ENCODE measurements at regions of chr1 and their contacts with region 1.

Region 1: DNA sequence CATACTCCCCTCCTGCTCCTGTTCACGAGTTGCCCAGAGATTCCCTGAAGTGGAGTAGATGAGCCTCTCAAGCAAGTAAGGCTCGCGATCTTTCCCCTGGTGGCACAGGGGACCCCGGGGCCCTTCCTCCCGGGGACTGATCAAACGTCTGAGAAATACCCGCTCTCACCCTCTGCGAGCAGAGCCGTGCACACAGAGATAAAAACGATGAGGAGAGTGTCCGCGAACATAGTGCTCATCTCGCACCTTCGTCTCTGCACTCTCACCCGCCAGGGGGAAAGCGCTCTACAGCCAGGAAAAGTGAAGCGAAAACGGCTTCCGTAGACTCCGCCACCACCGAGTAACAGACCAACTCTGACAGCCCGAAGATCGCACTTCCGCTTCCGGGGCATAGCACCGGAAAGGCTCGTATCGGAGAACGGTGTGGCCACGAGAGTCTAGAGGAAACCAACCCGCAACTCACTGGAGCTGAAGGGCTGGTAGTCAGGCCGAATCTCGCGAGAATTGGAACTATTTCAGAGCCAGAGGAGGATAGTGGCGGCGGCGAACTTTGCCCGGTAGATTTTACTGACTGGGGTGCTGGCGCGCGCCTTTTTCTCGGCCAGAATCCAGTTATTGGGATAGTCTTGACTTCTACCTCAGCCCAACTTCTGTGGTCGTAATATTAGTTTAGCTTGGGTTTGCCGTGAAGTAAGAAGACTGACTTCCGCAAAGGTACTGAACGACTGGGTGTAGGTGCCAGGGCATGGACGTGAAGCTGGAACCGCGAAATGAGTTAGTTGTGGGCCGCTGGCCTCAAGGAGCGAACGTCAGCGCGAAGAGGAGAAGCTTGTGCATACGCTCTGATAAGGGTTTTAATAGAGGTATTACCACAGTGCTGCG is at the start of gene TMCO1:
- DNase-seq: peak; percentile 85 to 99 (median 90)
- ATAC-seq: peak; percentile 93
- H3K4me3 ChIP-seq: peak within 1 kb of the TSS; percentile 76
- H3K4me3 Mint-ChIP-seq: peak within 1 kb of the TSS; percentile 95
- H3K27ac ChIP-seq: peak within 1 kb of the TSS; percentile 84 to 92
- H3K27ac Mint-ChIP-seq: peak within 1 kb of the TSS; percentile 93
- H3K4me1 ChIP-seq: peaks cover 28% of the 10 kb centered on the region
- H3K4me1 Mint-ChIP-seq: peaks cover 75% of the 10 kb centered on the region
- H3K27me3 ChIP-seq: no peaks in the 10 kb centered on the region
- H3K27me3 Mint-ChIP-seq: no peaks in the 10 kb centered on the region
- CTCF ChIP-seq: no peak
- total RNA-seq, gene TMCO1: 25.7 to 27.4 TPM

Region 2: DNA sequence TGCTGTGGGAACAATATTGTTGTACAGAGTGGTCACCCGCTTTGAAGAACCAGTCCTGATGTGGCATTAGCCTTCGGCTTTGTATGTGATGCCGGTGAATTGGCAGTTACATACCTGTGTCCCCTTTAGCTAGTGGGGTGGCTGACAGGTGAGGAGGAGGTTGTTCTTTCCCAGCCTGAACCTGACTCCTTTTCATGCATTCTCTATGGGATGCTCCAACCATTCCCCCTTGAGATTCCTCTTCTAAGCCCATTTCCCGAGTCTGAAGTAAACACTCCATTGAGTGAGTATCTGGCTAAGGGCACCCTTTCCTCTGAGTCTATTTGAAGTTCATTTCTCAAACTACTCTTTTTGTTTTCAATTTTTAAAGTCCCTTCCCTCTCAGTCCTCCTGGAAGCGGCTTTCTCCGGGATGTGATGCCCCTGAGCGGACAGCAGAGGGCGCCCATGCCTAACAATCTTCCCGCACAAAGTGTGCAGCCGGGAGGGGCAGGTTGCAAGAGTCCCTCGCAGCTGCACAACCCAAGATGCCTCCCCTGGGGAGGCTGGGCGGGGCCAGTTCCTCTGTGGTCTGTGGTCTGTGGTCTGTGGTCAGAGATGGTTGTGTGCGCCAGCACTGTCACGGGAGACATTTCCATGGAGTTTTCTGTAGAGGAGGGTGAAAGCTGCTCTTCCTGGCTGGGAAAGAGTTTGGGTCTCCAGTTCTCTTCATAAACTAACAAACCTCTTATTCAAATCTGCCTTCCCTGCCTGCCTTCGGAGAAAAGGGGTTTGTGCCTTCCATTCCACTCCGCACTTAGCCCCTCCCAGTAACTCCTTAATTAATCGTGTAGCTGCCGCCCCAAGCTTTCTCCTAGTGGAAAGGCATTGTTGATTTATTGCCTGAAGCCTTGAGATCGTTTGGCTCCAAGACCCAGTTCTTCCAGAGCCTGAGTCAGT is 375.9 kb before region 1 on chr1:
- CTCF ChIA-PET with region 1: no interaction called
- POLR2A ChIA-PET with region 1: no interaction called
- intact Hi-C with region 1: loop called in 1 of 2 experiments (anchors 5 kb)
- DNase-seq: peak; percentile 83 to 97 (median 88)
- ATAC-seq: peak; percentile 99
- H3K4me3 ChIP-seq: peak overlapping the region; percentile 23
- H3K4me3 Mint-ChIP-seq: peak overlapping the region; percentile 75
- H3K27ac ChIP-seq: no peak overlapping the region
- H3K27ac Mint-ChIP-seq: peak overlapping the region; percentile 75
- H3K4me1 ChIP-seq: peaks cover 19% of the 10 kb centered on the region
- H3K4me1 Mint-ChIP-seq: peaks cover 17% of the 10 kb centered on the region
- H3K27me3 ChIP-seq: peaks cover 56 to 72% of the 10 kb centered on the region in 2 experiments
- H3K27me3 Mint-ChIP-seq: peaks cover 92% of the 10 kb centered on the region
- CTCF ChIP-seq: peak; percentile 98

Region 3: DNA sequence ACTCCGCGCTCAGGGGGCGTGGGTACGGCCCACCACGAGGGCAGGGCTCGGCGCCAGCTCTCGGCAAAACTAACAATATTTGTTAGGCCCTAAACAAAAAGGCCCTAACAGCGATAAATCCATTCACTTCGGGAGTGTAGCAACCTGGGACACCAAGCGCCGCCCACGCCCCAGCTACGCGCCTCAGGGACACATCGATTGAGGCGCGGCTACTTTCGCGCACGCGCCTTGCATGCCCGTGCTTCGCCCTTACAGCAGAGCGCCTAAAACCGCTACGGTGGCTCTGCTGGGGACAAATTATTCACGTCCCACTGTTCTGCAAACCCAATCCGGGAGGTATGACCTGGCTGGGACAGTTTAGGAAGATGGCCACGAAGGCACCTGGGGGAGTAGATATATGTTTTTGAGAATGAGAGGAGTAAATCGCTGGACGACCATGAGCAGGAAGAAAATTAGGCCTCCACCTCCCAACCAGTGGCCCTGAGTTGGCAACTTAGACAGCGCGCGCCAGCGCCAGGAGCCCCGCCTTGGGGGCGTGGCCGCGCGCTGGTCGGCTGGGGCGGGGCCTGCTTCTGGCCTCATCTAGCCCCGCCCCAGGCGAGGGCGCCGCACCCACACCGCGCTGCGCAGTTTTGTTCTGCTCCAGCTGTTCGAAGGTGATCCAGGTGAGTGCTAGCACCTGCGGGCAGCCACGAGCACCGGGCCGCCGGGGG is 138.0 kb before region 1 on chr1 and contains the start of gene MGST3:
- CTCF ChIA-PET with region 1: no interaction called
- POLR2A ChIA-PET with region 1: interaction called, 28 read pairs
- intact Hi-C with region 1: loop called (anchors 2 kb)
- DNase-seq: peak; percentile 83 to 97 (median 90)
- ATAC-seq: peak; percentile 91
- H3K4me3 ChIP-seq: peak within 1 kb of the TSS; percentile 80
- H3K4me3 Mint-ChIP-seq: no peak within 1 kb of the TSS
- H3K27ac ChIP-seq: peak within 1 kb of the TSS; percentile 55 to 92
- H3K27ac Mint-ChIP-seq: no peak within 1 kb of the TSS
- H3K4me1 ChIP-seq: peaks cover 29% of the 10 kb centered on the region
- H3K4me1 Mint-ChIP-seq: peaks cover 14% of the 10 kb centered on the region
- H3K27me3 ChIP-seq: no peaks in the 10 kb centered on the region
- H3K27me3 Mint-ChIP-seq: no peaks in the 10 kb centered on the region
- CTCF ChIP-seq: no peak
- total RNA-seq, gene MGST3: 22.0 to 23.5 TPM

Region 4: DNA sequence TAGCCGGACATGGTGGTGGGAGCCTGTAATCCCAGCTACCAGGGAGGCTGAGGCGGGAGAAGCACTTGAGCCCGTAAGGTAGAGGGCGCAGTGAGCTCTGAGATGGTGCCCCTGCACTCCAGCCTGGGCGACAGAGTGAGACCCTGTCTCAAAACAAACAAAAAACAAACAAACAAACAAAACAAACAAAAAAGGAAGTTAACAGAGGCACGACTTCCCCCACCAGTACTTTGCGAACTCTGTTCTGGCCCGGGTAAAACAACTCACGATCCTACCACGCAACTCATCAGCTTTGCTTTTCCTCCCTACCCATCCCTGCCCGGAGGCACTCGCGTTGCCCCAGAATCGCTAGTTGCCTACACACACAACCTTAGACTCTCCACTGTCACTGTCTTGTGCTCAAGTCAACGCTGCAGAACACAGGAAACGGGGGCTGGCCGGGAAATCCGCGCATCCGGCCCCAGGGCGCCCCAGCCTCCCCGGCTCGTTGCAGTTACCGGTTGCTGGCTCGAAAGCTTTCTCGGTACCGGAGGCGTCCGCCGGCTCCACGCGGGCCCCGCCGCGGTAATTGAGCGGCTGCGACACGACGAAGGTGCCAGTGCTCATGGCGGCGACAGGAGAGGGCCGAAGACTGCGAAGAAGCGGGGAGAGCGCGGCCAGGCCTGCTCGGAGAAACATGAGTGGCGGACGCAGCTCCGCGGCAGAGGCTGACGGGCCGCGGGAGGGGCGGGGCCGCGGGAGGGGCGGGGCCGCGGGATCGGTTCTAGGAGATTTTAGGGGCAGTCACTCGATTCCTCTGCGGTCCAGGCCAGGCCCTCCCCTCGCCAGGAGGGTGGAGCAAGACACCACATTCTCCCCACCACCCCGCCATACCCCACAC is 70.6 kb before region 1 on chr1 and contains the start of gene ALDH9A1:
- CTCF ChIA-PET with region 1: interaction called, 4 read pairs
- POLR2A ChIA-PET with region 1: interaction called, 27 read pairs
- intact Hi-C with region 1: loop called (anchors 2 kb)
- DNase-seq: peak; percentile 70 to 90 (median 80)
- ATAC-seq: peak; percentile 91
- H3K4me3 ChIP-seq: peak within 1 kb of the TSS; percentile 65
- H3K4me3 Mint-ChIP-seq: peak within 1 kb of the TSS; percentile 98
- H3K27ac ChIP-seq: peak within 1 kb of the TSS; percentile 81 to 90
- H3K27ac Mint-ChIP-seq: peak within 1 kb of the TSS; percentile 92
- H3K4me1 ChIP-seq: peaks cover 26% of the 10 kb centered on the region
- H3K4me1 Mint-ChIP-seq: peaks cover 45% of the 10 kb centered on the region
- H3K27me3 ChIP-seq: no peaks in the 10 kb centered on the region
- H3K27me3 Mint-ChIP-seq: no peaks in the 10 kb centered on the region
- CTCF ChIP-seq: no peak
- total RNA-seq, gene ALDH9A1: 33.9 to 35.5 TPM

Region 5: DNA sequence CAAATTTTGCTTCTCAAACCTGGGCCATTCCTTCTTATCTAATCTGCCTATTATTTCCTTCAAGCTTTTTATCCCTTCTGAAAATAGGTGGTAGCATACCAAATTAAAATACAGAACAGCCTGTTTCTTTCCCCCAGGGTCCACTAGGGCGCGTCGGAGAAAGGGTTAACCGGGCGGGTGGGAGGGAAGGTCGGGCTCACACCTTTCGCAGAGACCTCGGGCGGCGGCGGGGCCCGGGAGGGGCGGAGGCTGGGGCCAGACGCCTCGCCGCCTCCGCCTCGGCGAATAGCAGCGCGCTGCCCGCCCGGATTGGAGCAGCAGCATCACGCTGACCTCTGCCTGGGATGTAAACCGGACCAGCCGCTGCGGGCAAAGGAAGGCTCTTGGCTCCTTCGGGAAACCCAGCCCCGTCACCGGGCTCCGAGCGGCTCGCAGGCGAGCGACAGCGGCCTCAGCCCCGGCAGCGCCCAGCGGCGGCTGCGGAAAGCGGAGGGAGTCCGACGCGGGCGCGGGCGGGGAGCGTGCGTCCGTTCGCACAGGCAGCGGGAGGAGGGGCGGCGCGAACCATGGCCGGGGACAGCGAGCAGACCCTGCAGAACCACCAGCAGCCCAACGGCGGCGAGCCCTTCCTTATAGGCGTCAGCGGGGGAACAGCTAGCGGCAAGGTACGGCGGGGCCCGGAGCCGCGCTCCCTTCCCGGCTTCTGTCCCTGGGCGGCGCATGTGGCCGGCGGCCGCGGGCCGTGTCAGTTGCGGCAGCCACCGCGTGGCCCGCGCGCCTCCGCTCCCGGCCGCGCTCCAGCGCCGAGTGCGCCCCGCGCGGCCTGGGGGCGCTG is 58.7 kb after region 1 on chr1 and contains the start of gene UCK2:
- CTCF ChIA-PET with region 1: no interaction called
- POLR2A ChIA-PET with region 1: interaction called, 14 read pairs
- intact Hi-C with region 1: loop called (anchors 5 kb)
- DNase-seq: peak; percentile 11 to 75 (median 24)
- ATAC-seq: peak; percentile 78
- H3K4me3 ChIP-seq: peak within 1 kb of the TSS; percentile 69
- H3K4me3 Mint-ChIP-seq: peak within 1 kb of the TSS; percentile 91
- H3K27ac ChIP-seq: no peak within 1 kb of the TSS
- H3K27ac Mint-ChIP-seq: peak within 1 kb of the TSS; percentile 31
- H3K4me1 ChIP-seq: peaks cover 16% of the 10 kb centered on the region
- H3K4me1 Mint-ChIP-seq: peaks cover 23% of the 10 kb centered on the region
- H3K27me3 ChIP-seq: no peaks in the 10 kb centered on the region
- H3K27me3 Mint-ChIP-seq: peaks cover 4% of the 10 kb centered on the region
- CTCF ChIP-seq: no peak
- total RNA-seq, gene UCK2: 0.67 to 0.71 TPM

Region 6: DNA sequence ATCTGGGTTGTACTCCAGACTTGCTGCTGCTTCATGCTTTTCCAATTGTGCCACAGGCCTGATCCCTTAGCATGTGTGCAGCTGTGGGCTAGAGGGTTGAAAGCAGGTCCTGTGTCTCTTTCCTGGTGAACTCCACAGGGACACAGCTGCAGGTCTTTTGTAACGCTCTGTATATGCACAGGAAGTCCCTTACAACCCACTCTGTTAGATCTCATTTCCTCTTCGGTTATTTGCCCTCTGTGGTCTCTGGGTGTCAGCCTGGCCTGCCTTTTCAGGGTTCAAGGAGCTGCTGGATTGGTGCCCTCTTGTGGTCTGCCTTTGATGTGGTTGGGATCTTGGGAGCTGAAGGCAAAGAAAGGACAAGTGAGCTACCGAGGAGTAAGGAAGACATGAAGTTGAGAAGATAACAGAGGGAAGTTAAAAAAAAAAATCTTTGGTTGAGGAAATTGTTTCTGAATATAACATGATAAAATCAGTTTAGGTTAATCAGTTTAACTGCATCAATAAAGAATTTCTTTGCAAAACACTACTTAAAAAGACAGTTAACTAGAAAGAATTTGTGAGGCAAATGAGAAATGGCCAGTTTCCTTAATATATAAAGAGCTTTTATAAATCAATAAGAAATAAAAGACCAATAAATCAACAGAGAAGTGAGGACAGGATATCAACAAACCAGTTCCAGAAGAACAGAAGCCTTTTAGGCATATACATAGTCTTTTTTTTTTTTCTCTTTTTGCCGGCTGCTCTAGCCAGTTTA is 102.7 kb after region 1 on chr1:
- CTCF ChIA-PET with region 1: no interaction called
- POLR2A ChIA-PET with region 1: interaction called, 11 read pairs
- intact Hi-C with region 1: no loop called
- DNase-seq: peak in 13 of 14 experiments; percentile 13 to 78 (median 33)
- ATAC-seq: peak; percentile 81
- H3K4me3 ChIP-seq: no peak overlapping the region
- H3K4me3 Mint-ChIP-seq: peak overlapping the region; percentile 52
- H3K27ac ChIP-seq: peak overlapping the region in 1 of 2 donors; percentile 5
- H3K27ac Mint-ChIP-seq: peak overlapping the region; percentile 25
- H3K4me1 ChIP-seq: peaks cover 29% of the 10 kb centered on the region
- H3K4me1 Mint-ChIP-seq: peaks cover 56% of the 10 kb centered on the region
- H3K27me3 ChIP-seq: no peaks in the 10 kb centered on the region
- H3K27me3 Mint-ChIP-seq: no peaks in the 10 kb centered on the region
- CTCF ChIP-seq: peak; percentile 35

Region 7: GRCh38 chr1:166838766-166839599 is 1070.2 kb after region 1 on chr1 and contains the start of gene POGK:
- CTCF ChIA-PET with region 1: no interaction called
- POLR2A ChIA-PET with region 1: no interaction called
- intact Hi-C with region 1: loop called in 1 of 2 experiments (anchors 10 kb)
- DNase-seq: peak; percentile 61 to 94 (median 78)
- ATAC-seq: peak; percentile 87
- H3K4me3 ChIP-seq: peak within 1 kb of the TSS; percentile 67
- H3K4me3 Mint-ChIP-seq: peak within 1 kb of the TSS; percentile 91
- H3K27ac ChIP-seq: peak within 1 kb of the TSS; percentile 56 to 79
- H3K27ac Mint-ChIP-seq: peak within 1 kb of the TSS; percentile 87
- H3K4me1 ChIP-seq: peaks cover 46% of the 10 kb centered on the region
- H3K4me1 Mint-ChIP-seq: peaks cover 53% of the 10 kb centered on the region
- H3K27me3 ChIP-seq: no peaks in the 10 kb centered on the region
- H3K27me3 Mint-ChIP-seq: no peaks in the 10 kb centered on the region
- CTCF ChIP-seq: no peak
- total RNA-seq, gene POGK: 16.1 to 17.6 TPM

Measured in CD4-positive, alpha-beta T cell (primary cell).